Activated naive CD4-positive, alpha-beta T cell treated with anti-CD3 and anti-CD28 coated beads for 36 hours (primary cell): ENCODE measurements at regions of chr17 and their contacts with region 1.

Region 1: GRCh38 chr17:51461578-51462004 is 201.2 kb downstream of the UTP18 start:
- DNase-seq: peak; percentile 76
- H3K4me3 Mint-ChIP-seq: no peak overlapping the region
- H3K27ac Mint-ChIP-seq: no peak overlapping the region
- H3K4me1 Mint-ChIP-seq: peaks cover 2% of the 10 kb centered on the region
- H3K27me3 Mint-ChIP-seq: no peaks in the 10 kb centered on the region

Region 2: DNA sequence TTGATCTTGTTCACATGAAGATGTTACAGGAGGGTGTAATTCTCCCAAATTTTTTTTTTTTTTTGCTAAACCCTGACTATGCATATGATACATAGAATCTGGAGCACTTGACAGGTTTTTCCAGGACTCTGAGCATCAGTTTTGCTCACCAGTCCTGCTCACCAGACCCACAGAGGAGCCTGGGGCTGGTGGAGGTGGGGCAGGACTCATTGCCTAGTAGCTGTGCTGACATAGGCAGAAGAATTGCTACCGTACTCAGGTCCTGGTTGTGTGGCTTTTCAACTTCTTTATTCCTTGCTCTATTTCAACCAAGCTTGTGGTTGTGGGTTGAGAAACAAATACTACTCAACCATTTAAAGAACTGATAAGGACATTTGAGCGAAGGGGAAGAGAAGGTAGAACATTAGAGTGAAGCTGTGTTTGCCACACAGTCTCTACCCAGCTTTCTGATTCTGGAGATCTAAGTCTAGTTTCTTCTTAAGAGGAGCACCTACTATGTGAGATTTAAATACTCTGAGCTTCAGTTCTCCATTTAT is 11.1 kb after region 1 on chr17:
- CTCF ChIA-PET with region 1: interaction called, 18 read pairs
- intact Hi-C with region 1: no loop called
- DNase-seq: no peak
- H3K4me3 Mint-ChIP-seq: no peak overlapping the region
- H3K27ac Mint-ChIP-seq: no peak overlapping the region
- H3K4me1 Mint-ChIP-seq: peaks cover 4% of the 10 kb centered on the region
- H3K27me3 Mint-ChIP-seq: no peaks in the 10 kb centered on the region

Region 3: GRCh38 chr17:51533219-51533618 is 71.6 kb after region 1 on chr17:
- CTCF ChIA-PET with region 1: interaction called, 14 read pairs
- intact Hi-C with region 1: loop called (anchors 1 kb)
- DNase-seq: no peak
- H3K4me3 Mint-ChIP-seq: no peak overlapping the region
- H3K27ac Mint-ChIP-seq: no peak overlapping the region
- H3K4me1 Mint-ChIP-seq: no peaks in the 10 kb centered on the region
- H3K27me3 Mint-ChIP-seq: no peaks in the 10 kb centered on the region

Region 4: GRCh38 chr17:51595826-51596398 is 134.3 kb after region 1 on chr17:
- CTCF ChIA-PET with region 1: no interaction called
- intact Hi-C with region 1: no loop called
- DNase-seq: no peak
- H3K4me3 Mint-ChIP-seq: no peak overlapping the region
- H3K27ac Mint-ChIP-seq: no peak overlapping the region
- H3K4me1 Mint-ChIP-seq: no peaks in the 10 kb centered on the region
- H3K27me3 Mint-ChIP-seq: no peaks in the 10 kb centered on the region

Region 5: GRCh38 chr17:51734462-51734861 is 272.9 kb after region 1 on chr17:
- CTCF ChIA-PET with region 1: no interaction called
- intact Hi-C with region 1: no loop called
- DNase-seq: peak; percentile 7
- H3K4me3 Mint-ChIP-seq: no peak overlapping the region
- H3K27ac Mint-ChIP-seq: no peak overlapping the region
- H3K4me1 Mint-ChIP-seq: no peaks in the 10 kb centered on the region
- H3K27me3 Mint-ChIP-seq: peaks cover 12% of the 10 kb centered on the region

Region 6: DNA sequence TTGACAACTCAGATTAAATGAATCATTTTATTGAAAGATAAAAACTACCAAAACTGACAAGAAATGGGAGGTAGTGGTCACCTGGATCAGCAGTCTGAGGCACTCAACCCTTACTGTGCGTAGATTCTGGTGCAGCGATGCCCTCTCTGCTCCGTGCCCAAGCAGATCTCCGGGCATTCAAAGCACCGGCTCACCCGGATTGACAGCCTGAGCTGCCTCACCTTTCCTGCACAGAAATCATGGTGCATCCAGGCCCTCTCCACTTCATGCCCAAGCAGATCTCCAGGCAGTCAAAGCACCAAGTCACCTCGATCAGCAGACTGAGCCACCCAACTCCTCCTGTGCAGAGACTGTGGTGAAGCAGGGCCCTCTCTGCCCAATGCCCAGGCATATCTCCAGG is 500.1 kb after region 1 on chr17:
- CTCF ChIA-PET with region 1: no interaction called
- intact Hi-C with region 1: no loop called
- DNase-seq: no peak
- H3K4me3 Mint-ChIP-seq: no peak overlapping the region
- H3K27ac Mint-ChIP-seq: no peak overlapping the region
- H3K4me1 Mint-ChIP-seq: no peaks in the 10 kb centered on the region
- H3K27me3 Mint-ChIP-seq: no peaks in the 10 kb centered on the region